PC-3 (cell line): ENCODE measurements at regions of chr21 and their contacts with region 1.

Region 1: DNA sequence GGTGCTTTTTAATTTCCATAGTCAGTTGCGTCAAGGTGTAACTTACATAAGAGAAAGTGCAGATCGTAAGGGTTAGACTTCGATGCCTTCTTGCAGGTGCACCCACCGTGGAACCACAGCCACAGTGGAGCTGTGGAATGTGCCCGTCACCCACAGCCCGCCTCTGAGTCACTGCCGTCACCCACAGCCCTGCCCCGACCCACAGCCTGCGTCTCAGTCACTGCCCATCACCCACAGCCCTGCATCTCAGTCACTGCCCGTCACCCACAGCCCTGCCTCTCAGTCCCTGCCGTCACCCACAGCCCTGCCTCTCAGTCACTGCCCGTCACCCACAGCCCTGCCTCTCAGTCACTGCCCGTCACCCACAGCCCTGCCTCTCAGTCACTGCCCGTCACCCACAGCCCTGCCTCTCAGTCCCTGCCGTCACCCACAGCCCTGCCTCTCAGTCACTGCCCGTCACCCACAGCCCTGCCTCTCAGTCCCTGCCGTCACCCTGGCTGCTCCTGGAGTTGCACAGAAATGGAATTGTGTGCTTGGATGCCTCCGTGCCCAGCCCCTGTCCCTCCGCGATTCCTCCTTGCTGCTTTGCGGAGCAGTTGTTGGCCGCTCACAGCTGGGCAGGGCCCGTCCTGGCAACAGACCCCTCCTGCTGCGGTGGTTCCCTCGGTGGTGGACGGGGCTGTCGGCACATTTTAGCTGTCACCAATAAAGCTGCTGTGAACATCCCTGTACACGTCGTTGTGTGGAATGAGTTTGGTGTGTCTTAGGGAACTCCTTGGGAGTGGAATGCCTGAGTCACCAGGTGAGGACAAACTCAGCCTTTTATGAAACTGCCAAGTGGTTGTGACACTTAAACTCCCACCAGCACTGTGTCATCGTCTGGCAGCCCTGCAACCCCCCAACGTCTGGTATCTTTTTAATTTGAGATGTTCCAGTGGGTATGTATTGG is 44.9 kb upstream of the COL6A2 start:
- DNase-seq: peak; percentile 94
- ATAC-seq: peak; percentile 82
- H3K4me3 ChIP-seq: peak overlapping the region; percentile 64
- H3K27ac ChIP-seq: peak overlapping the region; percentile 97
- H3K4me1 ChIP-seq: peaks cover 57% of the 10 kb centered on the region
- H3K27me3 ChIP-seq: no peaks in the 10 kb centered on the region
- CTCF ChIP-seq: no peak

Region 2: GRCh38 chr21:45923146-45923545 is 129.8 kb before region 1 on chr21:
- CTCF ChIA-PET with region 1: no interaction called
- POLR2A ChIA-PET with region 1: no interaction called
- intact Hi-C with region 1: no loop called
- DNase-seq: peak; percentile 81
- ATAC-seq: peak; percentile 96
- H3K4me3 ChIP-seq: no peak overlapping the region
- H3K27ac ChIP-seq: no peak overlapping the region
- H3K4me1 ChIP-seq: no peaks in the 10 kb centered on the region
- H3K27me3 ChIP-seq: no peaks in the 10 kb centered on the region
- CTCF ChIP-seq: peak; percentile 91

Region 3: GRCh38 chr21:45981151-45982089 is 71.6 kb before region 1 on chr21 and contains the start of gene COL6A1:
- CTCF ChIA-PET with region 1: no interaction called
- POLR2A ChIA-PET with region 1: interaction called, 3 read pairs
- intact Hi-C with region 1: loop called (anchors 5 kb)
- DNase-seq: peak; percentile 66
- ATAC-seq: peak; percentile 37
- H3K4me3 ChIP-seq: peak within 1 kb of the TSS; percentile 88
- H3K27ac ChIP-seq: peak within 1 kb of the TSS; percentile 84
- H3K4me1 ChIP-seq: peaks cover 44% of the 10 kb centered on the region
- H3K27me3 ChIP-seq: no peaks in the 10 kb centered on the region
- CTCF ChIP-seq: no peak
- total RNA-seq, gene COL6A1: 487 and 628 TPM in 2 replicates